ENCODE measurements at regions of chr10 and their contacts with region 1.

Region 1: GRCh38 chr10:22218451-22218850 is 636 bp upstream of the EBLN1 start:
- DNase-seq: no peak
- ATAC-seq: no peak

Region 2: DNA sequence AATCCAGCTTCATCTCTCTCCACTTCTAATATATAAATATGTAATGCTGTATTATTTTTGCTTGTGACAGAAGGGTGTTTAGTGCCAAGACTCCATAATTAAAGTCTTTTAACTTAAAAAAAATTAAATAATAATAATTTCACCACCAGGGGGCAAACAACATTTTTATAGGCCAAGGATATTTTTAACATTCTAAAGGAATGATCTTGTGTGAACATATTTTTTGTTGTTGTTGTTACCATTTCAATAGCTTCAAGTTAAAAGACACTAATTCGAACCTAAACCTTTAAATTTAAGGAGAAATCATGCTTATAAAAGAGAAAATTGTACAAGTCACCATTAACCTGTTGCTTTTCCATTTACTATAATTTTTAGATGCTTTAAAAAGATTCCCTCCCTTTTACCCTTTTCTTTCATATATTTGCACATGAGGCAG is 207.5 kb before region 1 on chr10:
- intact Hi-C with region 1: loop called in 1 of 2 experiments (anchors 10 kb)
- DNase-seq: no peak
- ATAC-seq: no peak

Measured in left cardiac atrium (tissue), 4 donors.